ENCODE measurements at regions of chr3 and their contacts with region 1.

Region 1: GRCh38 chr3:112293368-112294321 is at the start of gene SLC9C1:
- DNase-seq: peak; percentile 72
- H3K4me3 Mint-ChIP-seq: peak within 1 kb of the TSS; percentile 60
- H3K27ac Mint-ChIP-seq: peak within 1 kb of the TSS; percentile 20
- H3K4me1 Mint-ChIP-seq: peaks cover 19% of the 10 kb centered on the region
- H3K27me3 Mint-ChIP-seq: no peaks in the 10 kb centered on the region
- total RNA-seq, gene SLC9C1: not detected

Region 2: DNA sequence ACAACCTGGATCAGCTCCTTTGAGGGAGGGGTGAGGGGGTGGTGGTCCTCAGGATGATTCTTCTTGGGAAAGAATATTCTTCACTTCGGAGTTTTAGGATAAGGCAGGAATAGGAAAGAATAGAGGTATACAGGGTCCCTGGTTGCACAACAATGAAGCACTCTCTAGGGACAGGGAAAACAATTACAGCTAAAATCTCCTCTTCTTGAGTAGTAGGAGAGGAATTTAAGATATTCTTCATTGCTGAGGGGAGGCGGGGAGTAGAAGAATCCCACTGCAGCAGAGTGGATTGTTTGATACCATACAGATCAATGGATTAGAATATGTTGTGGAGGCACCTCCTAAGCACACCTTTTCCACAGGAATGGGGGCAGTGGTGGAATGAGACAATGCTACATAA is 20.1 kb before region 1 on chr3:
- CTCF ChIA-PET with region 1: interaction called, 21 read pairs
- intact Hi-C with region 1: no loop called
- DNase-seq: no peak
- H3K4me3 Mint-ChIP-seq: no peak overlapping the region
- H3K27ac Mint-ChIP-seq: no peak overlapping the region
- H3K4me1 Mint-ChIP-seq: no peaks in the 10 kb centered on the region
- H3K27me3 Mint-ChIP-seq: no peaks in the 10 kb centered on the region

Region 3: DNA sequence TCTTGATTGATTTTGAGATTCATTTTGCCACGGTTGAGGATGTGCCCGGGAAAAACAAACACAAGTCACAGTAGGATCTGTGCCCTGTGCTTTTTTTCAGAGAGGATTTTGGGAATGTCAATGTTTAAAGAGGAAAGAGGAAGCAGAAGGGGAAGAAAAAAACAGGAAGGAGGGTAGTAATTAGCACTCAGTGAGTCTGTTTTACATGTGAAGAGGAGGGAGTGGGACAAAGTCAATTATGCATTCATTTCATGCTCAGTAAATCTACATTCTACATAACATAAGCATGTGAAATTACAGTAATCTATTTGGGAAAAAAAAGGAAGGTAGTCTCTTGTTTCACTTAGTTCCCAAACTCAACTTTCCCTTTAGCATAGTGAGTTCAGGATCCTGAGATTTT is 21.0 kb after region 1 on chr3:
- CTCF ChIA-PET with region 1: interaction called, 12 read pairs
- intact Hi-C with region 1: no loop called
- DNase-seq: no peak
- H3K4me3 Mint-ChIP-seq: no peak overlapping the region
- H3K27ac Mint-ChIP-seq: no peak overlapping the region
- H3K4me1 Mint-ChIP-seq: no peaks in the 10 kb centered on the region
- H3K27me3 Mint-ChIP-seq: peaks cover 6% of the 10 kb centered on the region

Region 4: GRCh38 chr3:112327371-112327951 is 33.8 kb after region 1 on chr3:
- CTCF ChIA-PET with region 1: interaction called, 23 read pairs
- intact Hi-C with region 1: loop called (anchors 1 kb)
- DNase-seq: peak; percentile 65
- H3K4me3 Mint-ChIP-seq: no peak overlapping the region
- H3K27ac Mint-ChIP-seq: no peak overlapping the region
- H3K4me1 Mint-ChIP-seq: peaks cover 13% of the 10 kb centered on the region
- H3K27me3 Mint-ChIP-seq: peaks cover 9% of the 10 kb centered on the region

Region 5: DNA sequence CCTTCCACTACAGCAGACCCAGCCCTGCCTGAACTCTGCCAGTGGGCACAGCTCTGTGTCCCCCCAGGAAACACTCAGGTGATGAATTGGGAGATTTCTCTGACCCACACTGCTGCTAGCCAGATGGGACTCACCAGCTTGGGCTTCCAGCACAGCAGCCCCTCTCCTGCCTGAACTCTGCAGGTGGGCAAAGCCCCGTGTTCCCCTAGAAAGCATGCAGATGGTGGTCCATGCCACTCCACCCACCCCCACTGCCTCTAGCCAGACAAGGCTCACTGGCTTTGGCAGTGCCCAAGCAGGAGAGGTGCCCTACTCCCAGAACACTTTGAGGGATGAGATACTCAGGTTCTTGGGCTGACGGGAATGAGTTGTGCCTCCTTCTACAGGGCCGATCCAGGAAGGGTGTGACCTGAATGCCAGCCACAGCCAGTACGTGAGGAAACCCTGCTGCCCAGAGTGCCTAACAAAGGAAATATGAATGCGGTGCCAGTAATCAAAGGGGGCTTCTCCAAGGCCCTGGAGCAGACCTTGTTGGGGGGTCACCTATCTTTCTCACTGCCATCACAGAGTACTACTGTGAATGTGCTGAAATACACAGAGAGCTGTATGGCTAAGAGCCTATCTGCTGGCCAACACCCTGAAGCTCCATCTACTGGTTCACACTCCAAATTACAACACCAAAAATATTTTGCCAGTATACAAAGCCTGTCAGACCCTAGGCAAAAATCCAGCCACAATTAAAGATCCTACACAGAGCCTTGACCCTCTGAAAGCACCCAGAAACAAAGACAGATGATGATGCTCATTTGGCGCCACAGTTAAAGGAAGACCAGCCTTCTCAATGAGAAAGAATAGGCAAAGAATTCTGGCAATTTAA is 143.7 kb after region 1 on chr3:
- CTCF ChIA-PET with region 1: interaction called, 12 read pairs
- intact Hi-C with region 1: loop called (anchors 1 kb)
- DNase-seq: peak; percentile 20
- H3K4me3 Mint-ChIP-seq: no peak overlapping the region
- H3K27ac Mint-ChIP-seq: peak overlapping the region; percentile 62
- H3K4me1 Mint-ChIP-seq: peaks cover 52% of the 10 kb centered on the region
- H3K27me3 Mint-ChIP-seq: no peaks in the 10 kb centered on the region

Region 6: DNA sequence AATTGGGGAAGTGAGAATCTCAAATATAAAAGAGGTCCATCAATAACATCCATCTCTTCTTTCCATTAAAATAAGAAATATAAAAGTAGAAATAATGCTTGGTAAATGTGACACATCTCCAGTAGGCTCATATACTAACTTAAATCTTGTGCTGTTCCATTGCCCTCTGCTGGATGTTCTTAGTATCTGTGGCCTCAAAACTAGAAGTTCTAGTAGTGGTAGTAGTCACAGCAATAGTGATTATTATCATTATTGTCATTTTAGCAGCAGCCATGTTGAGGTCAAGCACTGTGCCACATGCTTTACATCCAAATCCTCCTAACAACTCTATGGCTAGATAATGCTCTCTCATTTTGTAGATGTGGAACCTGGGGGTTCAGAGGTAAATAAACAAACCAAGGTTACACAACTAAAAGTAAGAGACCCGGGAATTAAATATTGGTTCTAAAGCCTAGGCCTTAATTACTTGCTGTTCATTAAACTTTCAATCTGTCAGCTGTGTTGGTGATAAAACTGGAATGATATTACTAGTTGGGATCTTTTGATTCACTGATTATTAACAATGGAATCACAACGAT is 225.9 kb after region 1 on chr3:
- CTCF ChIA-PET with region 1: interaction called, 13 read pairs
- intact Hi-C with region 1: loop called (anchors 1 kb)
- DNase-seq: peak; percentile 53
- H3K4me3 Mint-ChIP-seq: no peak overlapping the region
- H3K27ac Mint-ChIP-seq: peak overlapping the region; percentile 84
- H3K4me1 Mint-ChIP-seq: peaks cover 34% of the 10 kb centered on the region
- H3K27me3 Mint-ChIP-seq: no peaks in the 10 kb centered on the region

Region 7: GRCh38 chr3:112642912-112643506 is 349.4 kb after region 1 on chr3:
- CTCF ChIA-PET with region 1: interaction called, 5 read pairs
- intact Hi-C with region 1: loop called (anchors 5 kb)
- DNase-seq: peak; percentile 92
- H3K4me3 Mint-ChIP-seq: peak overlapping the region; percentile 55
- H3K27ac Mint-ChIP-seq: no peak overlapping the region
- H3K4me1 Mint-ChIP-seq: peaks cover 14% of the 10 kb centered on the region
- H3K27me3 Mint-ChIP-seq: peaks cover 10% of the 10 kb centered on the region

Region 8: GRCh38 chr3:113275929-113276750 is 982.5 kb after region 1 on chr3:
- CTCF ChIA-PET with region 1: no interaction called
- intact Hi-C with region 1: no loop called
- DNase-seq: no peak
- H3K4me3 Mint-ChIP-seq: no peak overlapping the region
- H3K27ac Mint-ChIP-seq: no peak overlapping the region
- H3K4me1 Mint-ChIP-seq: peaks cover 6% of the 10 kb centered on the region
- H3K27me3 Mint-ChIP-seq: no peaks in the 10 kb centered on the region

Measured in activated naive CD4-positive, alpha-beta T cell treated with anti-CD3 and anti-CD28 coated beads for 36 hours (primary cell).